Activated B cell treated with CpG ODN at 0.5 μM for 24 hours (primary cell): ENCODE measurements at regions of chr1 and their contacts with region 1.

Region 1: DNA sequence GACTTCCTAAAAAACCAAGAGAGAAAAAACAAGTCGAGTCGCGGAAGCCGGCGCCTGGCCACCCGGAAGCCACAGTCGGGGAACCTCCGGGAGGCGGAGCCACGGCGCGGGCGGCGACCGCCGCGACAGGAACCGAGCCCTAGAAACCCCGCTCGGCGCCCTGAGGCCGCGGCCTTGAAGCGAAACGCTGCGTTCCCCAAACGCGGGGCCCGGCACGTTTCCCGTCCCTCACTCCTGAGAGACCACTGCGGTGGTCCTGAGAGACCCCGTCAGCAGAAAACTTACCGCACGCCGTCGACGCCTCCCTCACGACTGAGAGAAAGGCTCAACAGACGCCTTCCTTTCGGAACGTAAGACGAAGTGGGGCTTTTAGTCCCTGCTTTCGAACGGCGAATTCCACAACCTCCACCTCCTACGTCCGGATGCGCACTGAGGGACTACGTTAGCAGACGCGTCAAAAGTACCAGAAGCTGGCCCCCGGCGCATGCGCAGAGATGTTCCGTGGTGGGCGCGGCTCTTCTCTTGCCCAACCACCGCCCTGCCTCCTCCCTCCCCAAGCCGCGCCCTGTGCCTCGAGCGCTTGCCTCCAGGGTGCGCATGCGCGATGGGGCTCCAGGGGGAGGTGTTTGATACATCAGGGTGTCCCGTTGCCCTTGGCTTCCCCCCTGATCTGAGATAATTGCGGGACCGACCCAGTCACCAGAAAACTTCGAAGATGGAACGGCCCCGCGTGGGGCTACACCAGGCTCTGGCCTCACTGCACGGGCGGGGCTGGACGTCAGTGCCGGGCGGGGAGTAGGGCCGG is at the start of gene RSRP1:
- DNase-seq: peak; percentile 98
- ATAC-seq: peak; percentile 87
- H3K4me3 Mint-ChIP-seq: peak within 1 kb of the TSS; percentile 97
- H3K27ac Mint-ChIP-seq: peak within 1 kb of the TSS; percentile 99
- H3K4me1 Mint-ChIP-seq: peaks cover 45% of the 10 kb centered on the region
- H3K27me3 Mint-ChIP-seq: no peaks in the 10 kb centered on the region
- CTCF ChIP-seq: no peak
- total RNA-seq, gene RSRP1: 179 and 222 TPM in 2 replicates

Region 2: DNA sequence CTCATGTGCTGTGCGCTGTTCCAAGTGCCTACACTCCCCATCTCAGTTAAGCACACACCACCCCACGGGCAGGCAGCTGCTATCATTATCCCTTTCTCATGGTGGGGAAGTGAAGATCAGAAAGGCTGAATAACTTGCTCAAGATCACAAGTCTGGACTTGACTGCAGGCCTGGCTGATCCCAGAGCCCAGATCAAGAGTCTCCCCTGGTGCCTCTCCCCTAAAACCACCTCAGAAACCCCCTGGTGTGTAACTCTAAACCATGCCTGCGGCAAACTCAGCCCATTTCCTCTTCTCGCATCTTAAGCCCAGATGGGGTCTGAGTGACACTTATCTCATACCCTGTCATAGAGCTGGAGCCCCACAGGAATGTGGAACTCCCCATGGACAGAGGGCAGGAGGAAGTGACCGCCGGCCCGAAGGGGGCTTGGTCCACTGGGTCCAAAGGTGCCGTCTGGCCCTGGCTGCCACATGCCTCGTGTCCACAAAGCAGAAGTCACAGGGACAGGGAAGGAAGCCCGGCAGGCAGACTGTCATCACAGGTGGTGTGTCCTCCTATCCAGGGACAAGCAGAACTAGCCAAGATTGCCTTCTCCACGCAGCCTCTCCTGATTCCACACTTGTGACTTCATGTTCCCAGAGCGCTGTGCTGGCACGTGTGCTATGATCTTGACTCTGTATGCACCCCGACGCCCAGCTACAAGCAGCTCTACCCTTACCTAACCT is 107.0 kb before region 1 on chr1:
- CTCF ChIA-PET with region 1: no interaction called
- POLR2A ChIA-PET with region 1: no interaction called
- intact Hi-C with region 1: no loop called
- DNase-seq: no peak
- ATAC-seq: peak; percentile 82
- H3K4me3 Mint-ChIP-seq: no peak overlapping the region
- H3K27ac Mint-ChIP-seq: peak overlapping the region; percentile 15
- H3K4me1 Mint-ChIP-seq: peaks cover 9% of the 10 kb centered on the region
- H3K27me3 Mint-ChIP-seq: peaks cover 16% of the 10 kb centered on the region
- CTCF ChIP-seq: no peak

Region 3: DNA sequence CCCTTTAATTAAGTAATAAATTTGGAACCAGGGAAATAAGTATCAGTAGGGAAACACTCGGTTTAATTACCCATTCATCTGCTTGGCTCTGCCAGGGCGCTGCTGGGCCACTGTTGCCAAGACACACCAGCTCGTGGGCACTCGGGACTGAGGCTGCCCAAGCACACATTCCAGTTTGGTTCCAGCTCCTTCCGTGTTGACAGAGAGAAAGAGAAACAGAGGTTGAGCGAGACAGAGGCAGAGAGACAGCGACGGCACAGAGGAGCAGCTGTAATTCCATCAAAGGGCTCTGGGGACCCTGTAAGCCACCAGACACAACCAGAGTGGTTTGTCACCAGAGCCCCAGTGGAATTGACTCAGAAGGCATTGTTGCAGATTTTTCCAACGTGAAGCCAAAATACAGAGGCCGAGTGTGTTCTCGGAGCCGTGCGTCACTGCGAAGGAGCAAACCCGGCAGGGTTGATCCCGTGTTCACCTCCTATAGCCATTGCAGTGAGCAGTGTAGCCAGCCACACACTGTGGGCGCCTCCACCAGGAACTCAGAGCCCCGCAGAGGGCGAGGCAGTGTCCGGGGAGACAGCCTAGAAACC is 48.5 kb before region 1 on chr1:
- CTCF ChIA-PET with region 1: no interaction called
- POLR2A ChIA-PET with region 1: no interaction called
- intact Hi-C with region 1: no loop called
- DNase-seq: no peak
- ATAC-seq: peak; percentile 84
- H3K4me3 Mint-ChIP-seq: peak overlapping the region; percentile 7
- H3K27ac Mint-ChIP-seq: no peak overlapping the region
- H3K4me1 Mint-ChIP-seq: peaks cover 12% of the 10 kb centered on the region
- H3K27me3 Mint-ChIP-seq: peaks cover 7% of the 10 kb centered on the region
- CTCF ChIP-seq: no peak

Region 4: GRCh38 chr1:25232027-25232865 is 15.0 kb before region 1 on chr1 and contains the start of gene SYF2:
- CTCF ChIA-PET with region 1: interaction called, 6 read pairs
- POLR2A ChIA-PET with region 1: interaction called, 86 read pairs
- intact Hi-C with region 1: loop called (anchors 1 kb)
- DNase-seq: peak; percentile 81
- ATAC-seq: peak; percentile 87
- H3K4me3 Mint-ChIP-seq: no peak within 1 kb of the TSS
- H3K27ac Mint-ChIP-seq: no peak within 1 kb of the TSS
- H3K4me1 Mint-ChIP-seq: peaks cover 36% of the 10 kb centered on the region
- H3K27me3 Mint-ChIP-seq: no peaks in the 10 kb centered on the region
- CTCF ChIP-seq: no peak
- total RNA-seq, gene SYF2: 51.1 and 53.9 TPM in 2 replicates

Region 5: DNA sequence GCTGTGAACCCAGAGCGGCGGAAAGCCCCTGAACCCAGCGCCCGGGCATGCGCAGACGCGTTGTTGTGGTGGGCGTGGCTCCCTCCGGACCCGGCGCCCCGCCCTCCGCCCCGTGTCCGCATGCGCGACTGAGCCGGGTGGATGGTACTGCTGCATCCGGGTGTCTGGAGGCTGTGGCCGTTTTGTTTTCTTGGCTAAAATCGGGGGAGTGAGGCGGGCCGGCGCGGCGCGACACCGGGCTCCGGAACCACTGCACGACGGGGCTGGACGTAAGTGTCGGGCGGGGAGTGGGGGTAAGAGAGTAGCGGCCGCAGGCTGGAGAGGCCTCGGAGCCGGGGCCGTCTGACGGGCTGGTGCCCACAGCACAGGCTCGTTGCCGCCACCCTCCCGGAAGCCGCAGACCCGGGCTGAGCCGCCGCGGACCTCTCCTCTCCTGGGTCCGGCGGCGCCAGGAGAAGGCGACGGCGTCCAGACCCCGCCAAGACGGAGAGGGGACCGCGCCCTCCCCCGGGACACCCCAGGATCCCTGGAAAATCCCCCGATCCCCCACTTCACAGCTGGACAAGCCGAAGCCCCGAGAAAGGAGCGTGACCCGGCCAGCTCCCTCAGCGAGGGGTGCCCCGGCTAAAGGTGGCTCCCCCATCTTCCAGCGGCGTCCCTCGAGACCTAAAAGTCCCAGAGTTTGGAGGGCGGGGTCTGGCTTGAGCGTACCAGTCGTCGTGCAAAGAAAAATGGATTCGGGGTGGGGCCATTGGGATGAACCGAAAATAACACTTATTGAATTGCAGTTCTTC is 91.2 kb after region 1 on chr1 and contains the start of gene TMEM50A:
- CTCF ChIA-PET with region 1: no interaction called
- POLR2A ChIA-PET with region 1: interaction called, 11 read pairs
- intact Hi-C with region 1: loop called (anchors 2 kb)
- DNase-seq: peak; percentile 89
- ATAC-seq: peak; percentile 79
- H3K4me3 Mint-ChIP-seq: peak within 1 kb of the TSS; percentile 95
- H3K27ac Mint-ChIP-seq: peak within 1 kb of the TSS; percentile 94
- H3K4me1 Mint-ChIP-seq: peaks cover 49% of the 10 kb centered on the region
- H3K27me3 Mint-ChIP-seq: no peaks in the 10 kb centered on the region
- CTCF ChIP-seq: no peak
- total RNA-seq, gene TMEM50A: 61.0 and 63.5 TPM in 2 replicates